K562 (cell line): ENCODE measurements at regions of chr1 and their contacts with region 1.

Region 1: DNA sequence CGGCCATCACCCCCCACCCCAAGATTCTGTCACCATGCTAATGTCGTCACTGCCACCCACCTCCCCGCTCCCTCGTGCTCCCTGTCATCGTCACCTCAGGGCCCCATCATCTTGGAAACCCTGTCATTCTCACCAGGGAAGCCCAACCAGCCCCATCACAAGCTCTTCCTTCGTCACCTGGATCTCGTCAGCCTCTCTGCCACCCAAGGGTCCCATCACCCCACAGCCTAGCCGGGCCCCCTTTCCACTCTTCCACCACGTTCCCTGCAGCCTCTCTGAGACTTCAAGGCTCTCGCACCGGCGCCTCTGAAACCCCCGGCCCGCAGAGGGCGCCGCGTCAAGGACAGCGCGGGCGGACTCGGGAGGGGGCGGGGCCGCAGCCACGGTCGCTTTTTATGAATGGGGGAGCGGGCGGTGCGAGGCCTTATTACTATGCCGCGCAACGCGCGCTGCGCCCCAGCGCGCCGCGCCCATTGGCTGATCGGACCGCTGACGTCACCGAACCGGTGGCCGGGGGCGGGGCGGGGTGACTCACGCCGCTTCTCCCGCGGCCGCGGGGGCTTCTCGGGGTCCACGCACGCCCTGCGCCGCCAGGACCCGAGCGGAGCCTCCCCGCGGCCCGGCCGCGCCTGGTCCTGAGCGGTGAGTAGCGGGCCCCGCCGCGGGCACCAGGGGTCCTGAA is at the start of gene GPR3:
- DNase-seq: peak; percentile 98 to 100 (median 99)
- ATAC-seq: peak; percentile 94
- H3K4me3 ChIP-seq: peak within 1 kb of the TSS; percentile 96
- H3K27ac ChIP-seq: peak within 1 kb of the TSS; percentile 88
- H3K4me1 ChIP-seq: peaks cover 8 to 44% of the 10 kb centered on the region in 2 experiments
- H3K27me3 ChIP-seq: no peaks in the 10 kb centered on the region
- CTCF ChIP-seq: peak; percentile 68 to 89 (median 84)
- EP300 ChIP-seq: peak; percentile 54; the same call in 1 of the 2 replicates
- POLR2A ChIP-seq: peak; percentile 70
- RAD21 ChIP-seq: peak; percentile 45 to 60
- polyA plus RNA-seq, gene GPR3: 0.24 to 0.59 TPM

Region 2: DNA sequence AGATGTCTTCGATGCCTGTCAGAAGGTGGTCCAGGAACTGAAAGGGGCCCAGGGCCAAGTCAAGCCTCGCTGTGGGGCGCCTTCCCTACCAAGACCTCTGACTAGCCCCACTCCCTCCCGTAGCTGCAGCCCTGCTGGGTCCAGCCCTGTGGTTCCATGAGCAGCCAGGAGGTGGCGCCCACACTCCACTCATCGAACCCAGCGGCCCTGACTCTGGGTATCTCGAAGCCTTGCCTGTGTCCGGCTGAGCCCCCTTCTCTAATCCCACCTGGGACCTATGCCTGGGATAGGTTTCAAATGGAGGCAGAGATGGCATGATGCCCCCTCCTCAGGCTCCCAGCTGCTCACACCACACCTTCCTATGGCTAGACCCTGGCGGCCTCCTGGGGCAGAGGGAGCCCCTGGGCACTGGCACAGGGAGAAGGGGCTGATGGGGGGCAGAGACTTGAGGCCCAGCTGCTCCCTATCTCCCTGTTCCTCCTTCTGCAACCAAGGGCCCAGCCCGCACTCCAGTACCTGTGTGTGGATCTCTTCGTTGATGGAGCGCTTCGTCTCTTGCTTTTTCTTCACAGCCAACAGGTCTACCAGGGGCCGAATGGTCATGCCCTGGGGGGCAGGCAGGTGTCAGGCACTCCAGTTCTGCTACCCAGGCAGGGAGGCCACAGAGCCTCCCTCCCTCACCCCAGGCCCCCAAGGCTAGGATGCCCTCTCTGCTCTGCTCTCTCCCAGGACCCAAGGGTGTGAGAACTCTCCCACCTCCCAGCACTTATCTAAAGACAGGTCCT is 289.3 kb before region 1 on chr1:
- CTCF ChIA-PET with region 1: interaction called, 23 read pairs
- POLR2A ChIA-PET with region 1: interaction called, 3 read pairs
- in situ Hi-C with region 1: loop called (anchors 5 kb)
- intact Hi-C with region 1: loop called (anchors 5 kb)
- DNase-seq: peak; percentile 85 to 90 (median 88)
- ATAC-seq: peak; percentile 89
- H3K4me3 ChIP-seq: no peak overlapping the region
- H3K27ac ChIP-seq: no peak overlapping the region
- H3K4me1 ChIP-seq: peaks cover 18 to 57% of the 10 kb centered on the region in 2 experiments
- H3K27me3 ChIP-seq: no peaks in the 10 kb centered on the region; a peak in 1 of 5 replicates
- CTCF ChIP-seq: peak; percentile 97 to 99 (median 97)
- EP300 ChIP-seq: no peak
- POLR2A ChIP-seq: no peak
- RAD21 ChIP-seq: peak; percentile 95 to 98

Region 3: GRCh38 chr1:27332536-27333281 is 59.5 kb before region 1 on chr1:
- CTCF ChIA-PET with region 1: interaction called, 4 read pairs
- POLR2A ChIA-PET with region 1: interaction called, 4 read pairs
- in situ Hi-C with region 1: no loop called
- intact Hi-C with region 1: loop called (anchors 2 kb)
- DNase-seq: peak; percentile 76 to 85 (median 80)
- ATAC-seq: peak; percentile 95
- H3K4me3 ChIP-seq: no peak overlapping the region
- H3K27ac ChIP-seq: no peak overlapping the region; the same call in 2 of the 3 replicates
- H3K4me1 ChIP-seq: peaks cover 0 to 12% of the 10 kb centered on the region in 2 experiments; a peak in 2 of 5 replicates
- H3K27me3 ChIP-seq: no peaks in the 10 kb centered on the region
- CTCF ChIP-seq: peak; percentile 88 to 96 (median 90)
- EP300 ChIP-seq: no peak
- POLR2A ChIP-seq: no peak
- RAD21 ChIP-seq: peak; percentile 26 to 75; a peak in 3 of 4 replicates

Region 4: DNA sequence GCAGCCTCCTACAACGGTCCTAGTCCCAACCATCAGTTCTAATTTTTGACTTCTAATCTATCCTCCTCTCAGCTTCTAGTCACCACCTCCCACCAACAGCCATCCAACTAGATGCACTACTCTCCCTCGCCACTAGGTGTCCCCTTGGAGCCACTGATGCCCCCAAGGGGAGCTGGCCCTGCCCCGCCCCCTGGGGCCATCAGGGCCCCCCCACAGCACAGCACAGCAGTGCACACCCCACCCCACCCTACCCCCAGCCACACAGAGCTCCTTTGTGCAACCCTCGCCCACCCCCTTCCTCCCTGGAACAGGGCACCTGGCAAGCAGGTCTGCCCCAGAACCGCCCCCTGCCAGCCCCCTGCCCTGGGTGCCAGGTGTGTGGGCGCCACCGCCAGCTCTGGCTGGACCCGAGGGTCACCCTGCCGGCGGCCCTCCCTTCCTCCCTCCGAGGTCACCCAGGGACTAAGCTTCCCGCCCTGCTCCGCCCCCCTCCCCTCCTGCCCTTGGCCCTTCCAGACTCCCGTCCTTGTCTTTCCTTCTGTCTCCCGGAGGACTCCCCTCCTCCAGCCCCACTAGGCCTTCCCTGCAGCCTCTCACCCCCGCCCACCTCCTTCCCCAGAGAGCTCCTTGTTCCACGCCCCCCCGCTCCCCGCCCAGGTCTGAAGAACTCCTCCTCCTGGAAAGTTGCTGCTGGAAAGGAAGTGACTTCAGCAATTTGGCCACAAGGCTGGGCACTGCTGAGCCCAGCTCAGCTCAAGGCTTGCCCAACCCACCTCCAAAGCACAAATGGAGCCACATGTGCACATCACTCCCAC is 164.8 kb after region 1 on chr1:
- CTCF ChIA-PET with region 1: no interaction called
- POLR2A ChIA-PET with region 1: interaction called, 3 read pairs
- in situ Hi-C with region 1: no loop called
- intact Hi-C with region 1: loop called (anchors 5 kb)
- DNase-seq: peak; percentile 93 to 95 (median 94)
- ATAC-seq: peak; percentile 84
- H3K4me3 ChIP-seq: no peak overlapping the region
- H3K27ac ChIP-seq: peak overlapping the region; percentile 75
- H3K4me1 ChIP-seq: peaks cover 59 to 62% of the 10 kb centered on the region in 2 experiments
- H3K27me3 ChIP-seq: no peaks in the 10 kb centered on the region
- CTCF ChIP-seq: peak; percentile 91 to 93 (median 92)
- EP300 ChIP-seq: no peak; the same call in 1 of the 2 replicates
- POLR2A ChIP-seq: no peak
- RAD21 ChIP-seq: peak; percentile 79 to 89